ENCODE measurements at regions of chr7 and their contacts with region 1.

Region 1: GRCh38 chr7:113955157-113955556 is 36.3 kb upstream of the PPP1R3A start:
- DNase-seq: no peak
- H3K4me3 ChIP-seq: no peak overlapping the region
- H3K27ac ChIP-seq: no peak overlapping the region
- H3K4me1 ChIP-seq: no peaks in the 10 kb centered on the region
- H3K27me3 ChIP-seq: no peaks in the 10 kb centered on the region
- CTCF ChIP-seq: no peak
- POLR2A ChIP-seq: no peak

Region 2: DNA sequence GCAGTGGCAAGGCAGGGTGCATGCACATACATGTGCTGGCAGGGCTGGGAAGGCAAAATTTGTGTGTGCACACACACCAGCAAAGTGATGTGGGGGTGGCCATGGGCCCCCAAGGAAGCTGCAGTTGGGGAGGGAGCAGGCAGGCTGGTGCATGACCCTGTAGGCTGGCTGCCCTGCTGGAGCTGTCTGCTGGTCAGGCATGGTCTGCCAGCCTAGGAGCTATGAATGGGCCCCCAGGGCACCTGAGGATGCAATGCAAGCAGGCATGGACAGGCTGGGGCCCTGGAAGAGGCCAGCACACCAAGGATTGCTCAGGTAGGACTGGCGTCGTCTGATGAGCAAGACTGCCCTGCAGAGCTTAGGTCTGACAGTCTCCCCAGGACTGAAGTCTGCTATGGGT is 18.2 kb before region 1 on chr7:
- intact Hi-C with region 1: loop called (anchors 1 kb)
- DNase-seq: no peak
- H3K4me3 ChIP-seq: no peak overlapping the region
- H3K27ac ChIP-seq: no peak overlapping the region
- H3K4me1 ChIP-seq: no peaks in the 10 kb centered on the region
- H3K27me3 ChIP-seq: no peaks in the 10 kb centered on the region
- CTCF ChIP-seq: no peak
- POLR2A ChIP-seq: no peak

Region 3: DNA sequence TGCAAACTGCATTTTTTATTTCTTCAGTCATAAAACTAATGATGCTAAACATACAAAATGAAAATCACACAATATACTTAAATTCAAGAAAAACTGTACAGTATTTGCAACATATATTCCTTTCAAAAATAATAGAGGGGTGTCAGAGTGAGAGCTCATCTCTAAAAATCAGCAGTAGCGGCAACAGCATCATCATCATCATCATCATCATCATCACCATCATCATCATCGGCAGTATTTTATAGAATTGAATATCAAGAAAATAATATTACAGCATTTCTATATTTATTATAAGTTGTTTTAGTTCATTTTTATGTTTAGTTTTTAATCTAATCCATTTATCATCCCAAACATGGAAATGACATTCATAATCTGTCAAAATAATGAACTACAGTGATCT is 31.1 kb after region 1 on chr7:
- intact Hi-C with region 1: no loop called
- DNase-seq: no peak
- H3K4me3 ChIP-seq: no peak overlapping the region
- H3K27ac ChIP-seq: no peak overlapping the region
- H3K4me1 ChIP-seq: no peaks in the 10 kb centered on the region
- H3K27me3 ChIP-seq: no peaks in the 10 kb centered on the region
- CTCF ChIP-seq: no peak
- POLR2A ChIP-seq: no peak